ENCODE measurements at regions of chr20 and their contacts with region 1.

Region 1: GRCh38 chr20:58850693-58851174 is at the start of gene GNAS-AS1:
- DNase-seq: peak; percentile 87
- ATAC-seq: peak; percentile 87
- total RNA-seq, gene GNAS-AS1: 0.38 TPM

Region 2: GRCh38 chr20:58692594-58693226 is 158.0 kb before region 1 on chr20 and contains the start of gene NPEPL1:
- intact Hi-C with region 1: loop called (anchors 5 kb)
- DNase-seq: peak; percentile 90
- ATAC-seq: peak; percentile 88
- total RNA-seq, gene NPEPL1: 23.3 TPM

Region 3: GRCh38 chr20:58938541-58938940 is 87.8 kb after region 1 on chr20:
- intact Hi-C with region 1: no loop called
- DNase-seq: no peak
- ATAC-seq: no peak

Region 4: GRCh38 chr20:59322899-59323454 is 472.2 kb after region 1 on chr20:
- intact Hi-C with region 1: no loop called
- DNase-seq: no peak
- ATAC-seq: no peak